B cell (primary cell): ENCODE measurements at regions of chr1 and their contacts with region 1.

Region 1: GRCh38 chr1:159089184-159089791 is 12.7 kb upstream of the AIM2 start:
- DNase-seq: peak; percentile 60
- ATAC-seq: peak; percentile 48
- H3K4me3 ChIP-seq: no peak overlapping the region
- H3K4me3 Mint-ChIP-seq: no peak overlapping the region
- H3K27ac ChIP-seq: no peak overlapping the region
- H3K27ac Mint-ChIP-seq: peak overlapping the region; percentile 57
- H3K4me1 ChIP-seq: peaks cover 16% of the 10 kb centered on the region in 2 donors
- H3K4me1 Mint-ChIP-seq: peaks cover 23% of the 10 kb centered on the region
- H3K27me3 ChIP-seq: no peaks in the 10 kb centered on the region
- H3K27me3 Mint-ChIP-seq: no peaks in the 10 kb centered on the region
- CTCF ChIP-seq: peak; percentile 79

Region 2: DNA sequence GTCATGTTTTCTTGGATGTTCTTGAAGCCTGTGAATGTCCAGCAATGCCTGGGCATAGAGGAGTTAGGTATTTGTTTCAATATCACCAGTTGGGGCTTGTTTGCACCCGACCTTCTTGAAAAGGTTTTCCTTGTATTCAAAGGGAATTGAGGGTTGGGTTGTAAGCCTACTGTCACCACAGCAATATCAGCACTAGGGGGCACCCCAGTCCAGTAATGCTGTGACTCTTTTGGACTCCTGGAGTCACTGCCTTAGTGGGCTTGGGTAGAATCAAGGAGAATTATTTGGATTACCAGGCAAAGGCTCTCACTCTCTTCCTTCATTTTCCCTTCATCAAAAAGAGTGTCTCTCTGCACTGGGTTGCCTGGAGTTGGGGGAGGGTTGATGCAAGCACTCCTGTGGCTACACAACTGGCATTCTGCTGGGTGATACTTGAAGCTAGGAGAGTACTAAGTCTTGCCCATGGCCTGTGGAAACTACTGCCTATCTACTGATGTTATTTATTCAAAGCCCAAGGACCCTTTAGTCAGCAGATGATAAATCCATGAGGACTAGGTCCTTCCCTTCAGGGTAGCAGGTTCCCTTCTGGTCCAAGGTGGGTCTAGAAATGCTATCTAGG is 582.8 kb before region 1 on chr1:
- CTCF ChIA-PET with region 1: interaction called, 9 read pairs
- POLR2A ChIA-PET with region 1: interaction called, 3 read pairs
- intact Hi-C with region 1: loop called (anchors 1 kb)
- DNase-seq: peak; percentile 49
- ATAC-seq: peak; percentile 58
- H3K4me3 ChIP-seq: no peak overlapping the region
- H3K4me3 Mint-ChIP-seq: no peak overlapping the region
- H3K27ac ChIP-seq: no peak overlapping the region
- H3K27ac Mint-ChIP-seq: no peak overlapping the region
- H3K4me1 ChIP-seq: no peaks in the 10 kb centered on the region
- H3K4me1 Mint-ChIP-seq: no peaks in the 10 kb centered on the region
- H3K27me3 ChIP-seq: peaks cover 0 to 9% (median 0%) of the 10 kb centered on the region in 4 experiments
- H3K27me3 Mint-ChIP-seq: peaks cover 39% of the 10 kb centered on the region
- CTCF ChIP-seq: peak; percentile 58

Region 3: DNA sequence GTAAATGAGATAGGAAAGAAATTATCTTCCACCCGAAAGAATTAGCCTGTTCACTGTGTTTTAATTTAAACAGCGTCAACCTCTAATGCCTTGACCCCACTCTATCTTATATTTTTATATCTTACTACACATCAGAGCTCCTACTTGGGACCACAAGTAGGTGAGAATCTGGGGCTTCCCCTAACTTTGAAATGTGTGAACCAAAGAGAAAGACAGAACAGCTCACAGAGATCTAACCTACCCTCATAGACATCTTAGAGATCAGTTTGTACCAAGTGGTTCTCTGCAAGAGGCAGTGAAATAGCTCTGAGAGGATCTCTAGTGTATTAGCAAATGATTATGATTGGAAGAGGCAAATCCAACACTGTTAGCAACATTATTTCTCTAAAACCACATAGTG is 110.6 kb before region 1 on chr1:
- CTCF ChIA-PET with region 1: no interaction called
- POLR2A ChIA-PET with region 1: no interaction called
- intact Hi-C with region 1: no loop called
- DNase-seq: no peak
- ATAC-seq: no peak
- H3K4me3 ChIP-seq: no peak overlapping the region
- H3K4me3 Mint-ChIP-seq: no peak overlapping the region
- H3K27ac ChIP-seq: no peak overlapping the region
- H3K27ac Mint-ChIP-seq: no peak overlapping the region
- H3K4me1 ChIP-seq: no peaks in the 10 kb centered on the region
- H3K4me1 Mint-ChIP-seq: peaks cover 2% of the 10 kb centered on the region
- H3K27me3 ChIP-seq: no peaks in the 10 kb centered on the region
- H3K27me3 Mint-ChIP-seq: no peaks in the 10 kb centered on the region
- CTCF ChIP-seq: no peak

Region 4: DNA sequence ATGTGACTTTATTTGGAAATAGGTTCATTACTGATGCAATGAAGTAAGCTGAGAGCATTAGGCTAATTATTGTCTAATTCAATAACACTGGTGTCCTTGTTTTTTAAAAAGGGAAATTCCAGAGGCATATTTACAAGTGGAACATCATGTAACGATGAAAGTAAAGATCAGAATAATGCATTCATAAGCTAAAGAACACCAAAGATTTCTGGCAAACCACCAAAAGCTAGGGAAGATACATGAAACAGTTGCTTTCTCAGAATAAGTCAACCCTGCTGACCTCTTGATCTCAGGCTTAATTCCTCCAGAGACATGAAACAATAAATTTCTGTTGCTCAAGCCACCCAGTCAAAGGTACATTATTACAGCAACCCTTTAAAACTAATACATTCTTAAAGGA is 99.9 kb before region 1 on chr1:
- CTCF ChIA-PET with region 1: no interaction called
- POLR2A ChIA-PET with region 1: no interaction called
- intact Hi-C with region 1: no loop called
- DNase-seq: no peak
- ATAC-seq: no peak
- H3K4me3 ChIP-seq: no peak overlapping the region
- H3K4me3 Mint-ChIP-seq: no peak overlapping the region
- H3K27ac ChIP-seq: no peak overlapping the region
- H3K27ac Mint-ChIP-seq: no peak overlapping the region
- H3K4me1 ChIP-seq: no peaks in the 10 kb centered on the region
- H3K4me1 Mint-ChIP-seq: no peaks in the 10 kb centered on the region
- H3K27me3 ChIP-seq: peaks cover 0 to 4% (median 0%) of the 10 kb centered on the region in 4 experiments
- H3K27me3 Mint-ChIP-seq: peaks cover 6% of the 10 kb centered on the region
- CTCF ChIP-seq: no peak

Region 5: GRCh38 chr1:159056069-159056698 is 33.1 kb before region 1 on chr1:
- CTCF ChIA-PET with region 1: interaction called, 41 read pairs
- POLR2A ChIA-PET with region 1: no interaction called
- intact Hi-C with region 1: loop called (anchors 2 kb)
- DNase-seq: no peak
- ATAC-seq: no peak
- H3K4me3 ChIP-seq: peak overlapping the region in 1 of 5 experiments; percentile 11
- H3K4me3 Mint-ChIP-seq: peak overlapping the region; percentile 40
- H3K27ac ChIP-seq: peak overlapping the region; percentile 66 to 78
- H3K27ac Mint-ChIP-seq: peak overlapping the region; percentile 89
- H3K4me1 ChIP-seq: peaks cover 58 to 74% of the 10 kb centered on the region in 2 donors
- H3K4me1 Mint-ChIP-seq: peaks cover 74% of the 10 kb centered on the region
- H3K27me3 ChIP-seq: no peaks in the 10 kb centered on the region
- H3K27me3 Mint-ChIP-seq: no peaks in the 10 kb centered on the region
- CTCF ChIP-seq: no peak

Region 6: DNA sequence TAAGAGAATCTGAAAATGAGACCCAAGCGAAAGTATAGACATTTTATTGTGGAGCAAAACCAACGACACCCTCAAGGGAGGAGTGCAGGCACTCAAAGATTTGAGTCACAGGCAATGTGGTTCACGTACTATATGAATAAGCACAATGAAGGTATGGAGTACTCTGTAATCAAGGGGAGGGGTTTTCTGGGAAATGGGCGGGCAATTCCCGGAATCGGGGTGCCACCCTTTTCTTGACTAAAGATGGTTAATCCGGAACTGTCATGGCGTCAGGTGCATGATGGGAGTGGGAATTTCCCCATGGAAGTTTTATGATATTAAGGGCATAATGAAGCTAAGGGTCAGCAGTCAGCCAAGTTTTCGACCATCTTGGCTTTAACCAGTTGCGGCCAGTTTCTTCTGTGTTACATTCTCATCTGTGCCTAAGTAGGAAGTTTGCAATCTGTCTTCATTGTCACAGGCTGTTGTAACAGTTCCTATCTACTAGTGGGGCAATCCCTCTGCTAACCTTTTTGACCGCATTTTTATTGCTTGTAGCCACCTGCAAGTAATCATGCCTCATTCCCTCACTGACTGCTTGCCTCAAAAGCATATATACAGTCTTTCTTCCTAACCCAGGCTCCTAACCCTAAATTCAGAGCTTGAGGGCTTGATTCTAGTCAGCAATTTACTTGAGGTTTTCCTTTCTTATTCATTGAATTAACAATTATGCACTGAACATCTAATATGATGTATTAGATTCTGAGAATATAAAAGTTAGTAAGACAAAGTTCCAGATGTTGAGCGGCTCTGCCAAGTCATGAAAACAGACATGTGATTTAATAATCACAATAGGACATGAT is 11.9 kb before region 1 on chr1:
- CTCF ChIA-PET with region 1: interaction called, 64 read pairs
- POLR2A ChIA-PET with region 1: no interaction called
- intact Hi-C with region 1: loop called (anchors 1 kb)
- DNase-seq: peak; percentile 83
- ATAC-seq: peak; percentile 61
- H3K4me3 ChIP-seq: peak overlapping the region in 4 of 5 experiments; percentile 54 to 80 (median 60)
- H3K4me3 Mint-ChIP-seq: peak overlapping the region; percentile 89
- H3K27ac ChIP-seq: peak overlapping the region; percentile 76 to 80
- H3K27ac Mint-ChIP-seq: peak overlapping the region; percentile 96
- H3K4me1 ChIP-seq: peaks cover 13 to 24% of the 10 kb centered on the region in 2 donors
- H3K4me1 Mint-ChIP-seq: peaks cover 28% of the 10 kb centered on the region
- H3K27me3 ChIP-seq: no peaks in the 10 kb centered on the region
- H3K27me3 Mint-ChIP-seq: no peaks in the 10 kb centered on the region
- CTCF ChIP-seq: no peak